Heart left ventricle (tissue), 16 donors: ENCODE measurements at regions of chr1 and their contacts with region 1.

Region 1: GRCh38 chr1:32221980-32222755 is at the starts of genes EIF3I and TMEM234:
- DNase-seq: peak; percentile 94
- ATAC-seq: peak; percentile 94 to 97 (median 96)
- H3K4me3 ChIP-seq: peak within 1 kb of the TSS; percentile 64 to 95 (median 80)
- H3K27ac ChIP-seq: peak within 1 kb of the TSS; percentile 39 to 97 (median 86)
- H3K4me1 ChIP-seq: peaks cover 13 to 29% (median 25%) of the 10 kb centered on the region in 12 donors
- H3K27me3 ChIP-seq: no peaks in the 10 kb centered on the region
- CTCF ChIP-seq: no peak
- POLR2A ChIP-seq: peak; percentile 58 to 77
- total RNA-seq, gene EIF3I: 94.8 to 191 (median 119) TPM
- total RNA-seq, gene TMEM234: 8.8 to 19.8 (median 10.8) TPM

Region 2: GRCh38 chr1:32263744-32264143 is 41.6 kb after region 1 on chr1:
- intact Hi-C with region 1: no loop called
- DNase-seq: no peak
- ATAC-seq: no peak
- H3K4me3 ChIP-seq: no peak overlapping the region
- H3K27ac ChIP-seq: no peak overlapping the region
- H3K4me1 ChIP-seq: peaks cover 0 to 4% (median 0%) of the 10 kb centered on the region in 12 donors
- H3K27me3 ChIP-seq: no peaks in the 10 kb centered on the region
- CTCF ChIP-seq: no peak
- POLR2A ChIP-seq: no peak

Region 3: GRCh38 chr1:32291708-32292492 is 69.7 kb after region 1 on chr1 and contains the start of gene HDAC1:
- intact Hi-C with region 1: loop called in 2 of 10 experiments (anchors 5 kb)
- DNase-seq: peak; percentile 96 to 99 (median 98)
- ATAC-seq: peak; percentile 98 to 99 (median 99)
- H3K4me3 ChIP-seq: peak within 1 kb of the TSS; percentile 50 to 92 (median 72)
- H3K27ac ChIP-seq: peak within 1 kb of the TSS; percentile 61 to 93 (median 82)
- H3K4me1 ChIP-seq: peaks cover 0 to 34% (median 12%) of the 10 kb centered on the region in 12 donors
- H3K27me3 ChIP-seq: no peaks in the 10 kb centered on the region
- CTCF ChIP-seq: peak in 1 of 12 donors; percentile 5
- POLR2A ChIP-seq: peak in 1 of 2 donors; percentile 51
- total RNA-seq, gene HDAC1: 22.0 to 46.6 (median 29.3) TPM

Region 4: DNA sequence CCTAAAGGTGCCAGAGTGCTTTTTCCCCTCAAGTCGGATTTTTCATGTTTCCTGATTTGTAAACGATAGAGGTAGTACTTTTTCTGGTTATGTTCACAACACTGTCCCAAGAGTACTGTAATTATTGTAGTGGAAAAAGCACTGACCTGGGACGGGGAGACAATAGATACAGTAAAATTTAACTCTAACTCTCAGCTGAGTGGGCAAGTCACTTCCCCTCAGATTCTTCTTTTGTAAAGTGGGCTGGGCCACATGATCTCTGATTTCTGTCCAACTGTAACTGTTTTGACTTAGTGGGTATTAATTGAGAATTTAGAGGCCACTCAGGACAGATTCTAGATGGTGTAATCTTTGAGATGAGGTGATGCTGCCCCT is 94.7 kb after region 1 on chr1:
- intact Hi-C with region 1: loop called in 5 of 10 experiments (anchors 5 to 10 kb)
- DNase-seq: no peak
- ATAC-seq: no peak
- H3K4me3 ChIP-seq: no peak overlapping the region
- H3K27ac ChIP-seq: no peak overlapping the region
- H3K4me1 ChIP-seq: peaks cover 0 to 14% (median 6%) of the 10 kb centered on the region in 12 donors
- H3K27me3 ChIP-seq: no peaks in the 10 kb centered on the region
- CTCF ChIP-seq: no peak
- POLR2A ChIP-seq: no peak

Region 5: GRCh38 chr1:32335790-32336590 is 113.8 kb after region 1 on chr1 and contains the start of gene MARCKSL1:
- intact Hi-C with region 1: loop called in 1 of 10 experiments (anchors 10 kb)
- DNase-seq: peak; percentile 85 to 92 (median 88)
- ATAC-seq: peak; percentile 9 to 76 (median 71)
- H3K4me3 ChIP-seq: peak within 1 kb of the TSS; percentile 62 to 93 (median 72)
- H3K27ac ChIP-seq: peak within 1 kb of the TSS; percentile 43 to 91 (median 73)
- H3K4me1 ChIP-seq: peaks cover 5 to 55% (median 22%) of the 10 kb centered on the region in 12 donors
- H3K27me3 ChIP-seq: peaks cover 0 to 5% (median 0%) of the 10 kb centered on the region in 9 donors
- CTCF ChIP-seq: peak in 1 of 12 donors; percentile 6
- POLR2A ChIP-seq: peak in 1 of 2 donors; percentile 90
- total RNA-seq, gene MARCKSL1: 6.8 to 44.0 (median 12.1) TPM

Region 6: GRCh38 chr1:32394141-32394889 is 172.1 kb after region 1 on chr1 and contains the start of gene BSDC1:
- intact Hi-C with region 1: loop called in 4 of 10 experiments (anchors 10 kb)
- DNase-seq: peak; percentile 98 to 99 (median 99)
- ATAC-seq: peak; percentile 98 to 100 (median 98)
- H3K4me3 ChIP-seq: peak within 1 kb of the TSS; percentile 64 to 98 (median 92)
- H3K27ac ChIP-seq: peak within 1 kb of the TSS; percentile 86 to 97 (median 90)
- H3K4me1 ChIP-seq: peaks cover 7 to 50% (median 31%) of the 10 kb centered on the region in 12 donors
- H3K27me3 ChIP-seq: no peaks in the 10 kb centered on the region
- CTCF ChIP-seq: no peak
- POLR2A ChIP-seq: peak; percentile 81 to 90
- total RNA-seq, gene BSDC1: 35.6 to 53.2 (median 44.5) TPM